ENCODE measurements at regions of chr22 and their contacts with region 1.

Region 1: GRCh38 chr22:44975427-44976262 is 34.2 kb downstream of the PHF21B start:
- DNase-seq: peak; percentile 85
- ATAC-seq: peak; percentile 97
- H3K4me3 ChIP-seq: no peak overlapping the region
- H3K27ac ChIP-seq: no peak overlapping the region
- H3K4me1 ChIP-seq: no peaks in the 10 kb centered on the region
- H3K27me3 ChIP-seq: peaks cover 27% of the 10 kb centered on the region
- CTCF ChIP-seq: peak; percentile 77

Region 2: DNA sequence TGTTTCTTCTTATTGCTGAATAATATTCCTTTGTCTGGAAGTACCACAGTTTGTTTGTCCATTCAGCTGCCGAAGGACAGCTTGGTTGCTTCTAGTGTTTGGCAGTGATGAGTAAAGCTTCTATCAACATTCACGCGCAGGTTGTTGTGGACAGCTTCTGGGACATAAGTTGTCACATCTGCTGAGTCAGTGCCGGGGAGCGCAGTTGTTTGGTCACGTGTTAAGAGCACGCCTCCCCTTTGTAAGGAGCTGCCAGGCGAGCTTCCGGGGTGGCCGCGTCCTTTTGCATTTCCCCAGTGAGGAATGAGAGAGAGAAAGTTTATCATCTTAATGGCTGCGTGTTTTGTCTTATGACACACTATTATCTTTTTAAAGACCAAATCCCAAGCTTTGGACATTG is 990.1 kb before region 1 on chr22:
- CTCF ChIA-PET with region 1: no interaction called
- POLR2A ChIA-PET with region 1: no interaction called
- intact Hi-C with region 1: no loop called
- DNase-seq: no peak
- ATAC-seq: no peak
- H3K4me3 ChIP-seq: no peak overlapping the region
- H3K27ac ChIP-seq: no peak overlapping the region
- H3K4me1 ChIP-seq: no peaks in the 10 kb centered on the region
- H3K27me3 ChIP-seq: no peaks in the 10 kb centered on the region
- CTCF ChIP-seq: no peak

Region 3: DNA sequence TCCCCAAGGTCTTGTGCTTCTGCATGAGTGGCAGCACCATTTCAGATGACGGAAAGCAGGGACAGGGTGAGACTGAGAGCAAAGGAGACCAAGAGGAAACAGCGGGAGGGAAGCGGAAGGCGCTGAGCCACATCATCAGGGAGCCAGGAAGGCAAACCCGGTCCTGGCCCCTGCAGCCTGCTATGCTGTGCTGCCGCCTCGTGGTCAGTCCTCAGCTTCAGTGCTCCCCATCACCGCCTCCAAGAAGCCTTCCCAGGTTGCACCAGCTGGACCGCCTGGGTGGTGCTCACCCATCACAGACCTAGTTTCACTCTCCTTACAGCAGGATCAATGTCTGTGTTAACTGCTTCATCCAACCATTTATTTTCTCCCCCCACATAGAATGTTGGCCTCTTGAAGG is 107.2 kb after region 1 on chr22:
- CTCF ChIA-PET with region 1: no interaction called
- POLR2A ChIA-PET with region 1: no interaction called
- intact Hi-C with region 1: loop called (anchors 5 kb)
- DNase-seq: peak; percentile 10
- ATAC-seq: peak; percentile 45
- H3K4me3 ChIP-seq: no peak overlapping the region
- H3K27ac ChIP-seq: no peak overlapping the region
- H3K4me1 ChIP-seq: peaks cover 15% of the 10 kb centered on the region
- H3K27me3 ChIP-seq: peaks cover 4% of the 10 kb centered on the region; the same call in 1 of the 2 replicates
- CTCF ChIP-seq: peak; percentile 53

Region 4: GRCh38 chr22:45096256-45096907 is 120.7 kb after region 1 on chr22:
- CTCF ChIA-PET with region 1: no interaction called
- POLR2A ChIA-PET with region 1: no interaction called
- intact Hi-C with region 1: loop called (anchors 1 kb)
- DNase-seq: peak; percentile 72
- ATAC-seq: peak; percentile 68
- H3K4me3 ChIP-seq: no peak overlapping the region
- H3K27ac ChIP-seq: no peak overlapping the region
- H3K4me1 ChIP-seq: no peaks in the 10 kb centered on the region
- H3K27me3 ChIP-seq: no peaks in the 10 kb centered on the region
- CTCF ChIP-seq: peak; percentile 81

Measured in PC-3 (cell line).